ENCODE measurements at regions of chr22 and their contacts with region 1.

Region 1: GRCh38 chr22:19891317-19892256 is 36.9 kb upstream of the GNB1L start:
- DNase-seq: peak; percentile 76 to 94 (median 80)
- H3K4me3 ChIP-seq: peak overlapping the region; percentile 8 to 46
- H3K4me3 Mint-ChIP-seq: peak overlapping the region; percentile 79 to 93 (median 86)
- H3K27ac ChIP-seq: peak overlapping the region; percentile 59
- H3K27ac Mint-ChIP-seq: peak overlapping the region; percentile 74 to 99 (median 96)
- H3K4me1 ChIP-seq: peaks cover 75% of the 10 kb centered on the region
- H3K4me1 Mint-ChIP-seq: peaks cover 33 to 85% (median 52%) of the 10 kb centered on the region in 4 donors
- H3K27me3 ChIP-seq: no peaks in the 10 kb centered on the region
- H3K27me3 Mint-ChIP-seq: no peaks in the 10 kb centered on the region

Region 2: GRCh38 chr22:19422440-19423301 is 468.9 kb before region 1 on chr22:
- CTCF ChIA-PET with region 1: no interaction called
- POLR2A ChIA-PET with region 1: no interaction called
- intact Hi-C with region 1: no loop called
- DNase-seq: no peak
- H3K4me3 ChIP-seq: no peak overlapping the region
- H3K4me3 Mint-ChIP-seq: peak overlapping the region in 3 of 8 donors; percentile 6 to 48 (median 37)
- H3K27ac ChIP-seq: no peak overlapping the region
- H3K27ac Mint-ChIP-seq: peak overlapping the region; percentile 37 to 88 (median 81)
- H3K4me1 ChIP-seq: peaks cover 67% of the 10 kb centered on the region
- H3K4me1 Mint-ChIP-seq: peaks cover 67 to 95% (median 79%) of the 10 kb centered on the region in 4 donors
- H3K27me3 ChIP-seq: no peaks in the 10 kb centered on the region
- H3K27me3 Mint-ChIP-seq: no peaks in the 10 kb centered on the region

Region 3: GRCh38 chr22:19598054-19598855 is 293.3 kb before region 1 on chr22:
- CTCF ChIA-PET with region 1: no interaction called
- POLR2A ChIA-PET with region 1: no interaction called
- intact Hi-C with region 1: no loop called
- DNase-seq: peak in 3 of 5 donors; percentile 20 to 48 (median 23)
- H3K4me3 ChIP-seq: peak overlapping the region in 1 of 2 donors; percentile 22
- H3K4me3 Mint-ChIP-seq: peak overlapping the region in 7 of 8 donors; percentile 59 to 84 (median 77)
- H3K27ac ChIP-seq: peak overlapping the region; percentile 51
- H3K27ac Mint-ChIP-seq: peak overlapping the region; percentile 82 to 97 (median 94)
- H3K4me1 ChIP-seq: peaks cover 43% of the 10 kb centered on the region
- H3K4me1 Mint-ChIP-seq: peaks cover 31 to 58% (median 41%) of the 10 kb centered on the region in 4 donors
- H3K27me3 ChIP-seq: no peaks in the 10 kb centered on the region
- H3K27me3 Mint-ChIP-seq: no peaks in the 10 kb centered on the region

Region 4: GRCh38 chr22:19730655-19731360 is 160.8 kb before region 1 on chr22:
- CTCF ChIA-PET with region 1: interaction called, 8 read pairs
- POLR2A ChIA-PET with region 1: interaction called, 13 read pairs
- intact Hi-C with region 1: no loop called
- DNase-seq: peak; percentile 72 to 84 (median 77)
- H3K4me3 ChIP-seq: no peak overlapping the region
- H3K4me3 Mint-ChIP-seq: peak overlapping the region; percentile 62 to 91 (median 84)
- H3K27ac ChIP-seq: no peak overlapping the region
- H3K27ac Mint-ChIP-seq: peak overlapping the region in 2 of 7 donors; percentile 68 to 80
- H3K4me1 ChIP-seq: peaks cover 11% of the 10 kb centered on the region
- H3K4me1 Mint-ChIP-seq: peaks cover 0 to 5% (median 3%) of the 10 kb centered on the region in 4 donors
- H3K27me3 ChIP-seq: no peaks in the 10 kb centered on the region
- H3K27me3 Mint-ChIP-seq: peaks cover 2 to 6% of the 10 kb centered on the region in 2 donors

Region 5: DNA sequence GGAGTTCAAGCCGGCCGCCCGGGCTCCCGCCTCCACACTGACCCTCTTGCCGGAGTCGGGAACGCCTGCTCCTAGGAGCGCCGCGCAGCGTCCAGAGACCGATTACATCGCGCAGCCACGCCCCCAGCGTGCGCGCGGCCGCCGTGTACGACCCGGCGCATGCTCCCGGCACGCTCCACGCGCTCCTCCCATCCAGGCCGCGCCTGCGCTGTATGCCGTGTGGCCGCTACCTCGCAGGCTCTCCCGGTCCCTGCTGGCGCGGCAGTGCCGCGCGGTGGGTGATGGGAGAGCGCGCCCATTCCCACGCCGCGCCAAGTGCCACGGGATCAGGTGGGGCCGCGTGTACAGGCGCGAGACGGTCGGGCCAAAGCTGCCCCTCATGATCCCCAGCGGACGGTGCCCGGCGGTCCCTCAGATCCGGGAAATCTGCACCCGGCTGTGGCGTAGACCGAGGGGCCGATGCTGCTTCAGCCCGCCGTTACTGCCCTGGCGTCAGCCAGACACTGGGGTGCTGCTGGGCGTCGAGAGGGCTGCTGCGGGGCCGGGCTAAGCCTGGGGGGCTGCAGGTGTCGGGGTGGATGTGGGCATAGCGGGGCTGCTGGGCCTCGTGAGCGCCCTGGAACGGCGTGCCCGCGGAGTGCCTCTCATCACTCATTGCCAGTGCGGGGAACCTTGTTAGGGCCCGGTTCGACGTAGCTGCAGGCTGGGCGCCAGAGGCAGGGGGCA is 36.6 kb before region 1 on chr22 and contains the starts of genes GNB1L and RTL10:
- CTCF ChIA-PET with region 1: interaction called, 3 read pairs
- POLR2A ChIA-PET with region 1: interaction called, 92 read pairs
- intact Hi-C with region 1: loop called (anchors 1 kb)
- DNase-seq: peak; percentile 93 to 95 (median 94)
- H3K4me3 ChIP-seq: peak within 1 kb of the TSS; percentile 77 to 94
- H3K4me3 Mint-ChIP-seq: peak within 1 kb of the TSS; percentile 92 to 98 (median 94)
- H3K27ac ChIP-seq: peak within 1 kb of the TSS; percentile 85
- H3K27ac Mint-ChIP-seq: peak within 1 kb of the TSS; percentile 94 to 96 (median 96)
- H3K4me1 ChIP-seq: peaks cover 43% of the 10 kb centered on the region
- H3K4me1 Mint-ChIP-seq: peaks cover 27 to 66% (median 45%) of the 10 kb centered on the region in 4 donors
- H3K27me3 ChIP-seq: no peaks in the 10 kb centered on the region
- H3K27me3 Mint-ChIP-seq: no peaks in the 10 kb centered on the region
- total RNA-seq, gene GNB1L: 7.9 to 8.7 TPM
- total RNA-seq, gene RTL10: 26.9 to 27.6 TPM

Region 6: DNA sequence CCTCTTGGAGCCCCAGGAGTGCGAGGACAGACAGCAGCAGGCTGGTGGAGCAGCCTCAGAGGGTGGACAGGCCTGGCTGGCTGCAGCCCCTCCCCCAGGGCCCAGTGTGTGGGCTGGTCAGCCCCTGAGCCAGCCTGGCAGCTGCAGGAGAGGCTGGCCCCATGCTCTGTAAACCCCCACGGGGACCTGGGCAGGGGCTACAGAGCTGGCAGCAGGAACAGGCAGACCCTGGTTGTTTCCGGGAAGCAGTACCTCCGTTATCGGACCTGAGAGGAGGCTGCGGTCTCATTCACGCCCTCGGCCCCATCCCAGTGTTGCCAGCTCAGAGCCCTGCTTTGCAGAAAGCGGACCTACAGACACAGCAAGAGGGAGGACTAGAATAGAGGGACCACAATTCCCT is 11.4 kb after region 1 on chr22:
- CTCF ChIA-PET with region 1: no interaction called
- POLR2A ChIA-PET with region 1: interaction called, 13 read pairs
- intact Hi-C with region 1: loop called (anchors 2 kb)
- DNase-seq: no peak
- H3K4me3 ChIP-seq: no peak overlapping the region
- H3K4me3 Mint-ChIP-seq: no peak overlapping the region
- H3K27ac ChIP-seq: no peak overlapping the region
- H3K27ac Mint-ChIP-seq: no peak overlapping the region
- H3K4me1 ChIP-seq: no peaks in the 10 kb centered on the region
- H3K4me1 Mint-ChIP-seq: peaks cover 0 to 1% (median 0%) of the 10 kb centered on the region in 4 donors
- H3K27me3 ChIP-seq: no peaks in the 10 kb centered on the region
- H3K27me3 Mint-ChIP-seq: no peaks in the 10 kb centered on the region

Region 7: GRCh38 chr22:19930551-19931486 is 39.2 kb after region 1 on chr22:
- CTCF ChIA-PET with region 1: no interaction called
- POLR2A ChIA-PET with region 1: no interaction called
- intact Hi-C with region 1: no loop called
- DNase-seq: no peak
- H3K4me3 ChIP-seq: no peak overlapping the region
- H3K4me3 Mint-ChIP-seq: no peak overlapping the region
- H3K27ac ChIP-seq: no peak overlapping the region
- H3K27ac Mint-ChIP-seq: peak overlapping the region in 2 of 7 donors; percentile 46 to 57
- H3K4me1 ChIP-seq: no peaks in the 10 kb centered on the region
- H3K4me1 Mint-ChIP-seq: peaks cover 2 to 6% (median 5%) of the 10 kb centered on the region in 4 donors
- H3K27me3 ChIP-seq: no peaks in the 10 kb centered on the region
- H3K27me3 Mint-ChIP-seq: no peaks in the 10 kb centered on the region

Region 8: GRCh38 chr22:19941365-19942082 is 49.9 kb after region 1 on chr22 and contains the starts of genes COMT and TXNRD2:
- CTCF ChIA-PET with region 1: no interaction called
- POLR2A ChIA-PET with region 1: interaction called, 10 read pairs
- intact Hi-C with region 1: no loop called
- DNase-seq: peak; percentile 61 to 70 (median 69)
- H3K4me3 ChIP-seq: peak within 1 kb of the TSS; percentile 72 to 91
- H3K4me3 Mint-ChIP-seq: peak within 1 kb of the TSS; percentile 92 to 96 (median 94)
- H3K27ac ChIP-seq: peak within 1 kb of the TSS; percentile 80
- H3K27ac Mint-ChIP-seq: peak within 1 kb of the TSS; percentile 85 to 97 (median 96)
- H3K4me1 ChIP-seq: peaks cover 31% of the 10 kb centered on the region
- H3K4me1 Mint-ChIP-seq: peaks cover 22 to 49% (median 39%) of the 10 kb centered on the region in 4 donors
- H3K27me3 ChIP-seq: no peaks in the 10 kb centered on the region
- H3K27me3 Mint-ChIP-seq: no peaks in the 10 kb centered on the region
- total RNA-seq, gene COMT: 36.8 to 39.2 TPM
- total RNA-seq, gene TXNRD2: 34.2 to 35.9 TPM

Region 9: GRCh38 chr22:20027966-20028854 is 136.6 kb after region 1 on chr22:
- CTCF ChIA-PET with region 1: no interaction called
- POLR2A ChIA-PET with region 1: no interaction called
- intact Hi-C with region 1: no loop called
- DNase-seq: no peak
- H3K4me3 ChIP-seq: no peak overlapping the region
- H3K4me3 Mint-ChIP-seq: no peak overlapping the region
- H3K27ac ChIP-seq: no peak overlapping the region
- H3K27ac Mint-ChIP-seq: no peak overlapping the region
- H3K4me1 ChIP-seq: peaks cover 52% of the 10 kb centered on the region
- H3K4me1 Mint-ChIP-seq: peaks cover 21 to 53% (median 36%) of the 10 kb centered on the region in 4 donors
- H3K27me3 ChIP-seq: no peaks in the 10 kb centered on the region
- H3K27me3 Mint-ChIP-seq: no peaks in the 10 kb centered on the region